Activated naive CD4-positive, alpha-beta T cell treated with anti-CD3 and anti-CD28 coated beads for 36 hours (primary cell): ENCODE measurements at regions of chr12 and their contacts with region 1.

Region 1: GRCh38 chr12:56041552-56042429 is at the start of gene RPS26:
- DNase-seq: peak; percentile 96
- H3K4me3 Mint-ChIP-seq: peak within 1 kb of the TSS; percentile 96
- H3K27ac Mint-ChIP-seq: peak within 1 kb of the TSS; percentile 98
- H3K4me1 Mint-ChIP-seq: peaks cover 57% of the 10 kb centered on the region
- H3K27me3 Mint-ChIP-seq: no peaks in the 10 kb centered on the region
- total RNA-seq, gene RPS26: 31.0 to 37.3 TPM

Region 2: GRCh38 chr12:55817346-55818139 is 224.2 kb before region 1 on chr12 and contains the starts of genes ORMDL2 and SARNP:
- CTCF ChIA-PET with region 1: no interaction called
- intact Hi-C with region 1: loop called (anchors 1 kb)
- DNase-seq: peak; percentile 99
- H3K4me3 Mint-ChIP-seq: no peak within 1 kb of the TSS
- H3K27ac Mint-ChIP-seq: no peak within 1 kb of the TSS
- H3K4me1 Mint-ChIP-seq: peaks cover 43% of the 10 kb centered on the region
- H3K27me3 Mint-ChIP-seq: no peaks in the 10 kb centered on the region
- total RNA-seq, gene ORMDL2: 23.8 to 26.4 TPM
- total RNA-seq, gene SARNP: 100 to 101 TPM

Region 3: DNA sequence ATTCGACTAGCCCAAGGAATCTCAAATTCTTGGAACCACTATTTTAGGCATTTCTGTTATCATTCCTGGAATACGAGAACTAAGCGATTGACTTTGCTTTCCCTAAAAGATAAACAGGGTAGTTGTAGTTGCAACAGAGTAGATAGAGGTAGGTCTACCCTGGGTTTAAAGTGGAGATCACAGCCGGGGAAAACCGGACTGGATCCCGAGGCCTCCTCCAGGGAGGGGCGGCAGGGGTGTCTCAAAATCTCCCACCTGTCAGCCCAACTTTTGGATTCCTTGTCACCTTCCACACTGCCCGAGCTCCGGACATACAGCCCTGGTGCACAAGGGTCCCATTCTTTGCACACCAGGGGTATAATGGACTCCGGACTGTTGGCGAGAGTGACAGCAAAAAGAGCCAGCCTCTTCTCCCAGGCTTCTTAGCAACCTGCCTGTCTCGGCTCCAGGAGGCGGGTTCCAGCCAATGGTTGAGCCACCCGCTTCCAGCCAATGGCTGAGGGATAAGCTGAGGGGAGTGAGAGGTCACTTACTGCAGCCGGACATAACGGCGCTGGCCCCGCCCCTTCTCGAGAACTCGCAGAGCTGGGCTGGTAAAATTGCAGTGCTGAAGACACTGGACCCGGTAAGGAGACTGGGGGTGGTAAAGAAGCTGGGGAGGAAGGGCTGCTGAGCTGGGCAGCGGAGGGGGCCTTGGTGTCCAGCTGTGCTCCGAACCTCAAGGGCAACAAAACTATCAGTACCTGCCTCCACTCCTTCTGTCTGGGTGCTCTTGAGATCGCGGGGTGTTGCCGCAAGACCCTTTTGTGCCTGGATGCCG is 44.9 kb before region 1 on chr12 and contains the start of gene SUOX:
- CTCF ChIA-PET with region 1: interaction called, 25 read pairs
- intact Hi-C with region 1: loop called (anchors 1 kb)
- DNase-seq: peak; percentile 72
- H3K4me3 Mint-ChIP-seq: peak within 1 kb of the TSS; percentile 72
- H3K27ac Mint-ChIP-seq: peak within 1 kb of the TSS; percentile 36
- H3K4me1 Mint-ChIP-seq: peaks cover 20% of the 10 kb centered on the region
- H3K27me3 Mint-ChIP-seq: peaks cover 18% of the 10 kb centered on the region
- total RNA-seq, gene SUOX: 1.7 to 2.2 TPM

Region 4: GRCh38 chr12:56020423-56021184 is 21.2 kb before region 1 on chr12 and contains the start of gene IKZF4:
- CTCF ChIA-PET with region 1: no interaction called
- intact Hi-C with region 1: loop called (anchors 1 kb)
- DNase-seq: peak; percentile 44
- H3K4me3 Mint-ChIP-seq: peak within 1 kb of the TSS; percentile 84
- H3K27ac Mint-ChIP-seq: peak within 1 kb of the TSS; percentile 80
- H3K4me1 Mint-ChIP-seq: peaks cover 30% of the 10 kb centered on the region
- H3K27me3 Mint-ChIP-seq: no peaks in the 10 kb centered on the region
- total RNA-seq, gene IKZF4: 7.5 to 8.2 TPM

Region 5: DNA sequence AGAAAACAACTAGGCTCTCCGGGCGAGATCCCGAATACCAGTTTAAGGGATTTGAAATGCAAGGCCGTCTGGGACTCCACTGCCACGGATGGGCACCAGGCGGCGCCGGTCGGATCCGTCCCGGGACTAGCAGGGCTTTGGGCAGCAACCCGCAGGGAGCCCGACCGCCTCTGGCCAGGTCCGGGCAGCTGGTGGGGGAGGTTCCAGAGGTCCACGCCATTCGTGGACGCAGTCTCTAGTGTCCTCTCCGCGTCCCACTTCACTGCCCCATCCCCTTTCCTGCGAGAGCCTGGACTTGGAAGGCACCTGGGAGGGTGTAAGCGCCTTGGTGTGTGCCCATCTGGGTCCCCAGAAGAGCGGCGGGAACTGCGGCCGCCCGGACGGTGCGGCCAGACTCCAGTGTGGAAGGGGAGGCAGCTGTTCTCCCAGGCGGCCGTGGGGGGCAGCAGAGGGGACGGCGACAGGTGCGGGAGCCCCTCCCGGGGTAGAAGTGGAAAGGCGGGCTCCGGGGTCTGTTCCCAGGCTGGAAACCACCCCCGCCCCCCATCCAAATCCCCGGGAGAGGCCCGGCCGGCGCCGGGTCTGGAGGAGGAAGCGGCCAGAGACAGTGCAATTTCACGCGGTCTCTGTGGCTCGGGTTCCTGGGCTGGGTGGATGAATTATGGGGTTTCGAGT is 37.3 kb after region 1 on chr12:
- CTCF ChIA-PET with region 1: interaction called, 4 read pairs
- intact Hi-C with region 1: loop called (anchors 5 kb)
- DNase-seq: peak; percentile 70
- H3K4me3 Mint-ChIP-seq: peak overlapping the region; percentile 76
- H3K27ac Mint-ChIP-seq: no peak overlapping the region
- H3K4me1 Mint-ChIP-seq: peaks cover 12% of the 10 kb centered on the region
- H3K27me3 Mint-ChIP-seq: peaks cover 17% of the 10 kb centered on the region